ENCODE measurements at regions of chr16 and their contacts with region 1.

Region 1: GRCh38 chr16:57422026-57422944 is 17.7 kb downstream of the CCL17 start:
- DNase-seq: no peak
- H3K4me3 Mint-ChIP-seq: no peak overlapping the region
- H3K27ac Mint-ChIP-seq: no peak overlapping the region
- H3K4me1 Mint-ChIP-seq: peaks cover 14% of the 10 kb centered on the region
- H3K27me3 Mint-ChIP-seq: peaks cover 5% of the 10 kb centered on the region

Region 2: DNA sequence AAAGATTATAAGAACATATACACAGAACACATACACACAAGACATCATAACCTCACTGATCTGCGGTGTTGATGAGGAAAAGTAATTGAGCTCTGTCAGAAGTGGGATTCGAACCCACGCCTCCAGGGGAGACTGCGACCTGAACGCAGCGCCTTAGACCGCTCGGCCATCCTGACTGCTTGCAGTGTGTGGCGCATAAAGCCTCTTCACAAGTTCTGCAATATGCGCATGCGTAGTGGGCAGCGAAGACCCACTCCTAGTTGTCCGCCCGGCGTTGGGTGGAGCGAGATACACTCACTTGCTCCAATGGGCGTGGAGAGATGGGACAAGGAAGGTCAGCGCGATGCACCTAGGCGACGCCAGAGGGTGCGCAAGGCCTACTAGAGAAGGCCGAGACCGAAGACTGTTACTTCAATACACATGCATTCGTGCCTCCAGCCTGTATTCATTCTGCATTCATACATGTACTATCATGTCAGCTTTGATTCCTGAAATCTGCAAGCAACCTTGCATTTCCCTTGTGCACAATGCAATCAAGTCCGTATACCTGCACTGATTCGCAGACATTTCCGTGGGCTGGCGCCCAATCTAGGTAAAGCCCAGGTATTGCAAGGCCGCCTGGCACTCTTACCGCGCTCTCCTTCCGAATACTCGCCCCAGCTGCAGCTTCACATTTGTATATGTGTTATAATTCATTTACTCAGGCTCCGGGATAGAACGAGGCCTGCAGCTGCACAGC is 121.7 kb before region 1 on chr16:
- CTCF ChIA-PET with region 1: interaction called, 160 read pairs
- POLR2A ChIA-PET with region 1: interaction called, 9 read pairs
- DNase-seq: peak; percentile 99
- H3K4me3 Mint-ChIP-seq: no peak overlapping the region
- H3K27ac Mint-ChIP-seq: no peak overlapping the region
- H3K4me1 Mint-ChIP-seq: peaks cover 26% of the 10 kb centered on the region
- H3K27me3 Mint-ChIP-seq: no peaks in the 10 kb centered on the region

Region 3: GRCh38 chr16:57432989-57433388 is 10.7 kb after region 1 on chr16:
- CTCF ChIA-PET with region 1: interaction called, 13 read pairs
- POLR2A ChIA-PET with region 1: no interaction called
- DNase-seq: no peak
- H3K4me3 Mint-ChIP-seq: no peak overlapping the region
- H3K27ac Mint-ChIP-seq: no peak overlapping the region
- H3K4me1 Mint-ChIP-seq: no peaks in the 10 kb centered on the region
- H3K27me3 Mint-ChIP-seq: no peaks in the 10 kb centered on the region

Measured in activated CD4-positive, alpha-beta memory T cell treated with anti-CD3 and anti-CD28 coated beads, Interleukin-2, amount 10 ng/mL, durations not matched to agents 7 days and 5 days (primary cell).